ENCODE measurements at regions of chr12 and their contacts with region 1.

Region 1: DNA sequence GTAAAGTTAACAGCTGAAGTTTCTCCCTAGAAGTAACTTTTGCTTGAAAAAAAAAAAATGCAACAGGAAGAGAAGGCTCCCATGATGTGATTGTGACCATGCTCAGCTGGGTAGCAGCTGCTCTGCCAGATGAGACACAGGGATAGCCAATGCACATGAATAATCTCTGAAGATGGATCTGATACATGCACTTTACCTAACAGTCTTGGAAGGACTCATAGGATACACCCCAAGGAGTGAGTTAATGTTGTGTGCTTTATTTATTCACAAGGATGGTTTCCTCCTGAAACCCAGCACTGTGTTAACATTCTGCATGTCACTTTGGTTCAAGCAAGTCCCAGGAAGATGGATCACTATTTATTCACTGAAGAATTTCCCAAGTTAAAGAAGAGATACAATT is 46.5 kb downstream of the NDUFA12 start:
- DNase-seq: no peak
- ATAC-seq: no peak
- H3K4me3 Mint-ChIP-seq: no peak overlapping the region
- H3K27ac Mint-ChIP-seq: no peak overlapping the region
- H3K4me1 Mint-ChIP-seq: peaks cover 3% of the 10 kb centered on the region; the same call in 1 of the 2 replicates
- H3K27me3 Mint-ChIP-seq: no peaks in the 10 kb centered on the region; the same call in 1 of the 2 replicates
- CTCF ChIP-seq: no peak

Region 2: GRCh38 chr12:94817695-94818075 is 139.3 kb before region 1 on chr12:
- CTCF ChIA-PET with region 1: no interaction called
- POLR2A ChIA-PET with region 1: interaction called, 10 read pairs
- DNase-seq: no peak
- ATAC-seq: no peak
- H3K4me3 Mint-ChIP-seq: no peak overlapping the region
- H3K27ac Mint-ChIP-seq: no peak overlapping the region
- H3K4me1 Mint-ChIP-seq: peaks cover 29% of the 10 kb centered on the region
- H3K27me3 Mint-ChIP-seq: peaks cover 22% of the 10 kb centered on the region
- CTCF ChIP-seq: no peak

Region 3: DNA sequence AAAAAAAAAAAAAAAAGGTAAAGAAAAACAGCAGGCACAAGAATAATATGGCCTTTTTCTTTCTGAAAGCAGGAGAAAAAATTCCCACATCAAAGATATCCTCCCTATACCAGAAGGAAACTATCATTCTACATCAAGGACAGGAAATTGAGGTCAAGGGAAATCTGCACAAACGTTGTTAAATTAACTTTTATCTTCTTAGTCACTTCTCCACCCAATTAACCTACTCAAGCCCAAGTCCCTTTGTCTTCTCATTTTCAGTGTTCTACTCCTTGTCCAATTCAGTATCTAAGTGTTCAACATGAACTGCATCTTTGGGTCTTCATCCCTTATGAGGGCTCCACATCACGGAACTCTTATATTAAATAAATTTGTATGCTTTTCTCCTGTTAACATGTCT is 30.8 kb after region 1 on chr12:
- CTCF ChIA-PET with region 1: no interaction called
- POLR2A ChIA-PET with region 1: no interaction called
- DNase-seq: no peak
- ATAC-seq: no peak
- H3K4me3 Mint-ChIP-seq: no peak overlapping the region
- H3K27ac Mint-ChIP-seq: no peak overlapping the region
- H3K4me1 Mint-ChIP-seq: peaks cover 5% of the 10 kb centered on the region
- H3K27me3 Mint-ChIP-seq: no peaks in the 10 kb centered on the region
- CTCF ChIP-seq: no peak

Region 4: GRCh38 chr12:96710127-96710745 is 1753.2 kb after region 1 on chr12:
- CTCF ChIA-PET with region 1: no interaction called
- POLR2A ChIA-PET with region 1: interaction called, 10 read pairs
- DNase-seq: peak; percentile 39
- ATAC-seq: peak; percentile 95
- H3K4me3 Mint-ChIP-seq: no peak overlapping the region
- H3K27ac Mint-ChIP-seq: no peak overlapping the region
- H3K4me1 Mint-ChIP-seq: peaks cover 13% of the 10 kb centered on the region
- H3K27me3 Mint-ChIP-seq: no peaks in the 10 kb centered on the region
- CTCF ChIP-seq: no peak

Measured in WTC11 (cell line).